ENCODE measurements at regions of chr5 and their contacts with region 1.

Region 1: DNA sequence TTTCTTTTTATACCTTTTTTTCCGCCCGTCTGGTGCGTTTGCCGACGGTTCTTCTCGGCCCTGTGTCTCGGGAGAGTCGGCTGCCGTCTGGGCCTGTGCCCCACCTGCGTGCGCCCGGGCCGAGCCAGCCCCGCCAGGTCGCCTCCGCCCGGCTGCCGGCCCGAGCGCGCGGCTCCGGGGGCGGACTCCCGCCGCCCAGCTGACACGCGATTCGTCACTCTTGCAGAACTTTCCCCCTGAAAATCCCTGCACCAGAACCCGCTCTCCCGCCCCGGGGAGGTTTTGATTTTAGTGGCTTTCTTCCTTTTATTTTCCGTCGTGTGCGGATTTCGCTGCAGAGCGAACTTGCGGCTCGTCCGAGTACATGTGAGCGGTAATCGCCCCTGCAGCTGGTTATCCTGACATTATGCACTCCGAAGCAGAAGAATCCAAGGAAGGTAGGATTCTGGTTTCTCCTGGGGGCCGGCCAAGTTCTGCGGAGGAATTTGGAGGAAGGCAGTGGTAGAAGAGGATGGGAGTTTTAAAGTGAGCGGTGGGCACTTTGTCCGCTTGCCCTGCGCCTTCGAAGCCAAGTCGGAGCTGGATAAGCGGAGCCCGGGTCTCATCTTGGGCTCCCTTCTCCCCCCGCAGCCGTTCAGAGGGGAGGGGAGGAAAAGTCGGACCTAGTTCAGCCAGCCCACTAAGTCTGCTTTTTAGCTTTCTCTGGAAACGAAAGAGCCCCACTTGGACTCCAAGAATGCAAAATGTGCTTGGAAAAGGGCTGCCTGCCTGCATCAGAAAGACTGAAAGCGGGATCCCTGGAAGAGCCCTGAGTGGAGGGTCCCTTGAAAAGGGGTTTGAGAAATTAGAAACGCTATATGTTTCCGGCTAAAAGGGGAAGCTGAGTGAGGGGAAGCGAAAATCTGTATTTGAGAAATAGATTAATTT is at the start of gene TNFAIP8:
- DNase-seq: peak in 2 of 3 donors; percentile 71 to 79
- H3K4me3 ChIP-seq: peak within 1 kb of the TSS; percentile 43 to 82 (median 67)
- H3K27ac ChIP-seq: no peak within 1 kb of the TSS
- H3K4me1 ChIP-seq: peaks cover 10 to 60% (median 39%) of the 10 kb centered on the region in 4 experiments
- H3K27me3 ChIP-seq: no peaks in the 10 kb centered on the region

Region 2: DNA sequence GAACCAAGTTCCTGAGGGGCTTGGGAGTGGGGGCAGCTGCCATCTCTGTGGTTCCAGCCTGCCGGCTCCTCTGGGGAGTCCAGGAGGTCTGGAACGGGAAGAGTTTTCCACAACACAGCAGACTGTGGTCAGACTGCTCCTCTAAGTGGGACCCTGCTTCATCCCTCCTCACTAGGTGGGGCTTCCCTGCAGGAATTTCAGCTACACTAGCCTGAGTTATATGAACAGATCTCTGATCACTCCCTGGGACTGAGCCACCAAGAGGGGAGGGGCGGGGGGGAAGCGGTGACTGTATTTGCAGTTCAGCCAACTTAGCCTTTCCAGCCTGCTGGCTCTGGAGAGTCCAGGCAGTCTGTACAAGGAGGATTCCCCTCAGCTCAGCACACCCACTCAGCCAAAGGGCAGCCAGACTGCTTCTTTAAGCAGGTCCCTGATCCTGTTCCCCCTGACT is 387.0 kb before region 1 on chr5:
- CTCF ChIA-PET with region 1: no interaction called
- POLR2A ChIA-PET with region 1: no interaction called
- DNase-seq: no peak
- H3K4me3 ChIP-seq: no peak overlapping the region
- H3K27ac ChIP-seq: no peak overlapping the region
- H3K4me1 ChIP-seq: no peaks in the 10 kb centered on the region
- H3K27me3 ChIP-seq: no peaks in the 10 kb centered on the region

Region 3: GRCh38 chr5:119022017-119022745 is 333.8 kb before region 1 on chr5:
- CTCF ChIA-PET with region 1: no interaction called
- POLR2A ChIA-PET with region 1: no interaction called
- DNase-seq: peak; percentile 52 to 66 (median 59)
- H3K4me3 ChIP-seq: no peak overlapping the region
- H3K27ac ChIP-seq: no peak overlapping the region
- H3K4me1 ChIP-seq: peaks cover 3 to 25% (median 8%) of the 10 kb centered on the region in 4 experiments
- H3K27me3 ChIP-seq: no peaks in the 10 kb centered on the region

Region 4: DNA sequence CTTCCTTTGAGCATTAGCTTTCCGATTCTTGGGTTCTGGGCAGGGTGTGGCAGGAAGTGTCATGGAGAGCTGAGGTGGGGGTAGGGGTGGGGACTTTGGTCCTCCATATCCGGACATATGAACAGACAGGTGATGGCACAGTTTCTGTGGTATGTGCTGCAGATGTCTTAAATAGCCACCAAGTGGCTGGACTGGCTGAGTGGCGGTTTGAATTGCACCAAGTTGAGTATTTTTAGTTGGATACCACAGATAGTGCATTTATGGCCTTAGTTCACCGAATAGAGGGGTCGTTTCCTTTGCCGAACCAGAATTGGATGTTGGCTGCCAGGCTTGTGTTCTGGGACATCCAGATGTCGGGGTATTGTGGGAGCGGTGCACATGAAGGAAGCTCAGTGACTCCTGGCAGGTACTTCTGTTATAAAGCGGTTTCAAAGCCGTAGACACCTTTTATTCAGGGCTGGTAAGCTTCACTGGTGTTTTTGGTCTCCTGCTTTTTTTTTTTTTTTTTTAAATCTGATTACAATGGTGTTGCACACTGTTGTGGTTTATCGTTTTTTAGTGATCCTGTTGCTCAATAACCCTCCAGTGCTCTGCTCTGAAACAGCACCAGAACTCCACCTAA is 15.2 kb before region 1 on chr5:
- CTCF ChIA-PET with region 1: interaction called, 12 read pairs
- POLR2A ChIA-PET with region 1: interaction called, 5 read pairs
- DNase-seq: peak in 1 of 3 donors; percentile 58
- H3K4me3 ChIP-seq: no peak overlapping the region
- H3K27ac ChIP-seq: peak overlapping the region in 1 of 2 experiments; percentile 28
- H3K4me1 ChIP-seq: peaks cover 39 to 84% (median 52%) of the 10 kb centered on the region in 4 experiments
- H3K27me3 ChIP-seq: no peaks in the 10 kb centered on the region

Region 5: GRCh38 chr5:119484893-119485292 is 128.9 kb after region 1 on chr5:
- CTCF ChIA-PET with region 1: no interaction called
- POLR2A ChIA-PET with region 1: no interaction called
- DNase-seq: no peak
- H3K4me3 ChIP-seq: no peak overlapping the region
- H3K27ac ChIP-seq: no peak overlapping the region
- H3K4me1 ChIP-seq: no peaks in the 10 kb centered on the region
- H3K27me3 ChIP-seq: no peaks in the 10 kb centered on the region